Head of caudate nucleus (tissue), 42 donors: ENCODE measurements at regions of chr3 and their contacts with region 1.

Region 1: GRCh38 chr3:89179355-89180001 is 72.1 kb downstream of the EPHA3 start:
- DNase-seq: no peak

Region 2: GRCh38 chr3:88713233-88713691 is 466.2 kb before region 1 on chr3:
- intact Hi-C with region 1: no loop called
- DNase-seq: no peak

Region 3: GRCh38 chr3:88758676-88759075 is 420.8 kb before region 1 on chr3:
- intact Hi-C with region 1: no loop called
- DNase-seq: no peak

Region 4: DNA sequence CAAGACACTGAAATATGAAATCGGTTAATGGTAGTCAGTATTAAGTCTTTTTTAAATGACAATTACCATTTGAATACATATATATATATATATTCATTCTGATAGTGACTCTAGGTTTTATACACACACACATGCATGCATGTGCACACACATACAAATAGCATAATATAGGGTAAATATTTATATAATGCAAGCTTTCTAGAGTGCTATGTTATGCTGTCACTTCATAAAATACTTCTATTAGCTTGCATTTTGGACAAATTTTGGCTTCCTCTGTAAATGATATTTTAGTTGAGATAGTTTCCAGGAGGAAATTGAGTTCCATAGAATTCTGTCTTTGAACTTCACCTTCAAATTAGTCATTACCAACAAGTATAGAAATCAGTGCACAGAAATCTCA is 161.9 kb before region 1 on chr3:
- intact Hi-C with region 1: no loop called
- DNase-seq: no peak

Region 5: GRCh38 chr3:89107461-89108290 is 71.8 kb before region 1 on chr3 and contains the start of gene EPHA3:
- intact Hi-C with region 1: loop called (anchors 10 kb)
- DNase-seq: peak; percentile 74 to 97 (median 89)